ENCODE measurements at regions of chr4 and their contacts with region 1.

Region 1: DNA sequence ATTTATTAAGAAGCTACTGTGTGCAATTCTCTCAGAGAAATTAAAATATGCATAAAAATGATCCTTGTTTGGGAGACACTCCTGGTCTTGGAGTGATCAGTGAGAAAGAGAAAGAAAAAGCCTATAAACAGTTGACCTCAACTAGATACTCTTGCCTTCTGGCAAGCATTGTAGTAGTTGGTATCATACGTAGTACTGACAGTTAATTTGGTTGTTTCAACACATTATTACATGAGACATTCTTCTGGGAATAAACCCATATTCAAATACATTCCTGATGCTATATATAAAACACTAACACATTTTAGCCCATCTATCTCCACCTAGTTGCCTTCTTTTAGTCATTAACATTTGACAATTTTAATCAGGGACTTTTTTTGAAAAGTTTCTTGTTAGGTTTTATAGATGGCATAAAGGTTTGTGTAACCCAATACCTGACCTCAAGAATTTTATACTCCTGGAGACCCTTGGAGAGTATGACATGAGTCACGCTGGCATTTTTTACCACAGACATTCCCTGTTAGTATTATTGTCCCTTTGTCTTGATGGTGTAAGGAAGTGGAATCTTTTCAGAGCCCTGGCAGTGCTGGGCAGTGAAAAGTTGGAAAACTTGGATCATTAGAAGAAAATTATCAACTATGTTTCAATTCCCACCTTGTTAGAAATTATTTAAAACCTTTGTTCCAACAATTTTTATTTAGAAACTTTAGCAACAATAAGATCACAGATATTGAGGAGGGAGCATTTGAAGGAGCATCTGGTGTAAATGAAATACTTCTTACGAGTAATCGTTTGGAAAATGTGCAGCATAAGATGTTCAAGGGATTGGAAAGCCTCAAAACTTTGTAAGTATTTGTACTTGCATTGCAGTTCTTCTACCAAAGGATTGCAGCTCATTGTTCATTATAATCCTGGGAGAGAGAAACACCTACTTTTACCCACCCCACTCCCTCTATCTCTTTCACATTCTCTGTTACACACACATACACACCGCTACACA is 167.1 kb upstream of the PACRGL start:
- DNase-seq: no peak
- H3K4me3 ChIP-seq: no peak overlapping the region
- H3K27ac ChIP-seq: no peak overlapping the region
- H3K27me3 ChIP-seq: no peaks in the 10 kb centered on the region
- CTCF ChIP-seq: no peak

Region 2: DNA sequence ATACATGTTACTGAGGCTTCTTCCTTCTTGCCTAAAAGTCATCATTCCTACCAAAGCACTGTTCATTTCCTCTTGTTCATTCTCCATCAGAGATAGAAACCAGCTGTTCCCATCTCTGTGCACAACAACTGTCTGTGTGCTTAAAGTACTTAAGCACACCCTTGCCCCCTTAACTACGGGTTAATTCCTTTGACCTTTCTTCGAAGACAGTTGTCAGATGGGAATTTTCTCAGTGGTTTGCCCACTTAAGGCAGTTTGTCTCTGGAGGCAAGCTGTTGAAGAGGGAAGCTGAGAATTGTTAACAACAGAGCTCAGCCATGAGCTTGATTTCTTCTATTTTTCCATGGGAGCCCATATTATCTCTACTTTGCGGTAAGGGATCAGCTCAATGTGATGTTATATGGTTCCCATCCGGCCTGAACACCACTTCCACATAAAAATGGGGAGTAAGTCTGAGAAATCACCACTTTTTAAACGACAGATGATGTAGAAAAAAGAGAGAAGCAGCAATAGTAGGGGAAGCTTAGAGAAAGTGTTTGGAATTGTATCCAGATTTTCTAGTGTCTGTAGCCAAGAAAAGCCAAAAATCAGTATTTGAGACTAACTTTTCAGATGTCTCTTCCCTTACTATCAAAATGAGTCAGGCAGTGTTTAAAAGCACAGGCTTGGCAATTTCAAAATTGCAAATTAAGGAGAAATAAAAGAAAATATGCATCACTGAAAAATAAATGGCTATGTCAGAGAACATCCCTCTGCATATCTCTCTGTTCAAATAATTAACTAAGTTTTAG is 87.0 kb before region 1 on chr4:
- intact Hi-C with region 1: loop called in 1 of 2 experiments (anchors 10 kb)
- DNase-seq: no peak
- H3K4me3 ChIP-seq: no peak overlapping the region
- H3K27ac ChIP-seq: no peak overlapping the region
- H3K27me3 ChIP-seq: no peaks in the 10 kb centered on the region
- CTCF ChIP-seq: no peak

Measured in dorsolateral prefrontal cortex (tissue), 120 donors.